ENCODE measurements at regions of chr16 and their contacts with region 1.

Region 1: GRCh38 chr16:68116256-68116867 is 31.2 kb downstream of the NFATC3 start:
- DNase-seq: no peak
- ATAC-seq: no peak
- H3K4me3 Mint-ChIP-seq: no peak overlapping the region
- H3K27ac Mint-ChIP-seq: peak overlapping the region; percentile 3
- H3K4me1 Mint-ChIP-seq: peaks cover 87% of the 10 kb centered on the region
- H3K27me3 Mint-ChIP-seq: no peaks in the 10 kb centered on the region
- CTCF ChIP-seq: peak; percentile 14

Region 2: DNA sequence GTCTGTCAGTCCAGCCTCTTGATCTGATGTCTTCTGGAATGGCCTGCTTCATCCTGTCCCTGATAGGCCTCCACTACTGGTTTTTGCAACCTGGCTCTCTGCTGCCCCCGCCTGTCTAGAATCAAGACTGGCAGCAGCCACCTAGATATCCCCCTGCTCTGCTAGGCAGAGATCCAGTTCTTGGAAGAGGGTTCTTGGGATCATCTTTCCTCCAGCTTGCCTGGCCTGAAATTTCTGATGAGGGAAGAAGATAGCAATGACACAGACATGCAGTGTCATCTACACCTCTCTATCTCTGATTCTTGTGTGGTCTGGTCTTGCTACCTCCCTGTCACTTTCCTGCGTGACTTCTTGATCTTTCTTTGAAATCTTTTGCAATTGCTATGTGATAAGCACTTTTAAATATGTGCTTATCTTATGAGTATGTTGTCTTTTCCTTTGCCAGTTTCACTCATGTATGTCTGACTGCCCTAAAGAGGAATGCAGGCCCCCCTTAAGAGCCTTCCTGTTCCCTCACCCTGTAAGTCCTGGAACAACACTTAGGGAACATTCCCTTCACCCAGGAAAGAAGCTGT is 51.5 kb before region 1 on chr16:
- CTCF ChIA-PET with region 1: interaction called, 4 read pairs
- POLR2A ChIA-PET with region 1: no interaction called
- intact Hi-C with region 1: loop called (anchors 2 kb)
- DNase-seq: peak; percentile 52
- ATAC-seq: peak; percentile 93
- H3K4me3 Mint-ChIP-seq: no peak overlapping the region
- H3K27ac Mint-ChIP-seq: no peak overlapping the region
- H3K4me1 Mint-ChIP-seq: peaks cover 27% of the 10 kb centered on the region
- H3K27me3 Mint-ChIP-seq: no peaks in the 10 kb centered on the region
- CTCF ChIP-seq: no peak

Region 3: GRCh38 chr16:68093816-68094613 is 22.3 kb before region 1 on chr16:
- CTCF ChIA-PET with region 1: interaction called, 14 read pairs
- POLR2A ChIA-PET with region 1: interaction called, 8 read pairs
- intact Hi-C with region 1: loop called (anchors 1 kb)
- DNase-seq: no peak
- ATAC-seq: peak; percentile 67
- H3K4me3 Mint-ChIP-seq: peak overlapping the region; percentile 6
- H3K27ac Mint-ChIP-seq: peak overlapping the region; percentile 65
- H3K4me1 Mint-ChIP-seq: peaks cover 87% of the 10 kb centered on the region
- H3K27me3 Mint-ChIP-seq: no peaks in the 10 kb centered on the region
- CTCF ChIP-seq: no peak

Region 4: DNA sequence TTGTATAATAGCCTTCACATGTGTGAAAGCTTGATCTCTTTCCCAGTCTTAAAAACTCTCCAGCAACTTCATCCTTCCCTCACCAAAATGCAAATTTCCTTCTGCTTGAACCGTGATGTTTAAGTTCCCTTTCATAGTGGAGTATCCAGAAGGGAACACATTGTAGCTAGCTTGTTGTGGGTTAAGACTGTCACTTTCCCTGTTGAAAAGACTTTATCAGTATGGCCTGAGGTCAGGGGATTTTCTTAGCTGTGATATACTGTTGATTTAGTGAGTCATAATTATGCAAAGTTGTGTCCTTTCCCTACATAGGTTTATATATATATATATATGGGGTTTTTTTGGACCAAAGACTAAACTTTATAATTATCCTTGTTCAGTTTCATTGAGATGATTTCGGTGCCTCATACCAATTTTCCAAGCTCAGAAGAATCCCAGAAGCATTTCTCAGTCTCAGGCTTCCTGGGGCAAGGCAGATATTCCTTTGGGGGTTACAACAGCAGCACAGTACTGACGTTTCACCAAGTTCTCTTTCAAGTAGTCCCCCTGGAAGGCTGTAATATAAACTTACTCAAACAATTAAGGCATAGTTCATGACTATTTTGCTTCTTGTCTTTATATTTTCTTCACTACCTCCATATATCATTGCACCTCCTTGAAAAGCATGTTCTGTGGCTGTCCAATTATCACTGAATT is 83.9 kb after region 1 on chr16:
- CTCF ChIA-PET with region 1: no interaction called
- POLR2A ChIA-PET with region 1: interaction called, 13 read pairs
- intact Hi-C with region 1: no loop called
- DNase-seq: no peak
- ATAC-seq: peak; percentile 45
- H3K4me3 Mint-ChIP-seq: no peak overlapping the region
- H3K27ac Mint-ChIP-seq: peak overlapping the region; percentile 55
- H3K4me1 Mint-ChIP-seq: peaks cover 8% of the 10 kb centered on the region
- H3K27me3 Mint-ChIP-seq: no peaks in the 10 kb centered on the region
- CTCF ChIP-seq: no peak

Measured in activated B cell treated with CpG ODN at 0.5 μM for 24 hours (primary cell).